Activated CD8-positive, alpha-beta memory T cell treated with anti-CD3 and anti-CD28 coated beads, Interleukin-2, amount 10 ng/mL, durations not matched to agents 7 days and 5 days (primary cell): ENCODE measurements at regions of chr11 and their contacts with region 1.

Region 1: GRCh38 chr11:120229451-120230424 is 10.2 kb upstream of the POU2F3 start:
- DNase-seq: peak; percentile 50
- ATAC-seq: peak; percentile 50
- H3K4me3 Mint-ChIP-seq: no peak overlapping the region
- H3K27ac Mint-ChIP-seq: no peak overlapping the region
- H3K4me1 Mint-ChIP-seq: peaks cover 6% of the 10 kb centered on the region
- H3K27me3 Mint-ChIP-seq: peaks cover 30% of the 10 kb centered on the region

Region 2: DNA sequence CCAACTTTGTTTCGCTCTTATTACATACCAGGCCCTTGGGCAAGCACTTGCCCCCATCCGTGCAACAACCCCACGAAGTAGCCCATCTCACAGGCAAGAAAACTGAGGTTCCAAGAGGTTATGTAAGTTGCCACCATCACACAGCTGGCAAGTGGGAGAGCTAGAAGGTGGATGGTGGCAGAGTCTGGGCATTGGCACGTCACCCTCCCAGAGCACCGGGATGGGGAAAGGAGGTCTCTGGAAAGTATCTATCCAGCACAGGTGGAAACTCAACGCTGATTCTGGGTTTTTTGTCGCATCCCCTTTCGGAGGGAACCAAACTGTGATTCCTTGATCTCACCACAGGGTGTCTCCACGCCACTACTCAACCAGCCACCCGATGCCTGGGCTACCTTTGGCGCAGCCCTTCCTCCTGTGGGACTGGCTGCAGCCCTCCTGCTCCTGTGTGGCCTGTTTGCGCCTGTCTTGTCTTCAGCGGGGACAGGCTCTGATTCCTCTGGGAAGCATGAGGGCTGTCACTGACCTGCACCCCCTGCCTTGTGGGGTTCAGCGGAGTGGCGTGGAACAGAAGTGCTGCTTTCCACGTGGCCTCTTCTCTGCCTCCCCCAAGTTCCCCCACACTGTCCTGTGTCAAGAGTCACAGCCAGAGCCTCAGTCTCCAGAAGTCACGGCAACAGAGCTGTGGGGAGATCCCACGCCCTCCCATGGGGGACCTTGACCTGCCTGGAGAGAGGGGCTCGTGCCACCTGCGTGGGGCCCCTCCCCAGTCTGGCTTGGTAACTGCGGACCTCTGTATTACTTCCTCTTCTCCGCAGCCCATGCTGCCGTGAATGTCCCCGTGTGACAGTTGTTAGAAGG is 57.5 kb before region 1 on chr11:
- CTCF ChIA-PET with region 1: interaction called, 24 read pairs
- DNase-seq: peak; percentile 68
- ATAC-seq: peak; percentile 68
- H3K4me3 Mint-ChIP-seq: no peak overlapping the region
- H3K27ac Mint-ChIP-seq: no peak overlapping the region
- H3K4me1 Mint-ChIP-seq: peaks cover 4% of the 10 kb centered on the region
- H3K27me3 Mint-ChIP-seq: peaks cover 86% of the 10 kb centered on the region

Region 3: GRCh38 chr11:120211522-120212258 is 18.0 kb before region 1 on chr11:
- CTCF ChIA-PET with region 1: interaction called, 11 read pairs
- DNase-seq: no peak
- ATAC-seq: no peak
- H3K4me3 Mint-ChIP-seq: peak overlapping the region; percentile 77
- H3K27ac Mint-ChIP-seq: peak overlapping the region; percentile 20
- H3K4me1 Mint-ChIP-seq: peaks cover 12% of the 10 kb centered on the region
- H3K27me3 Mint-ChIP-seq: peaks cover 44% of the 10 kb centered on the region